CD8-positive, alpha-beta T cell (primary cell): ENCODE measurements at regions of chr17 and their contacts with region 1.

Region 1: GRCh38 chr17:41648411-41649195 is 24.2 kb upstream of the KRT17 start:
- DNase-seq: peak; percentile 65 to 92 (median 86)
- ATAC-seq: peak; percentile 90
- H3K4me3 ChIP-seq: peak overlapping the region; percentile 52 to 55
- H3K4me3 Mint-ChIP-seq: peak overlapping the region; percentile 80
- H3K27ac ChIP-seq: no peak overlapping the region
- H3K27ac Mint-ChIP-seq: no peak overlapping the region
- H3K4me1 ChIP-seq: peaks cover 13% of the 10 kb centered on the region
- H3K4me1 Mint-ChIP-seq: peaks cover 9% of the 10 kb centered on the region
- H3K27me3 ChIP-seq: no peaks in the 10 kb centered on the region
- H3K27me3 Mint-ChIP-seq: no peaks in the 10 kb centered on the region
- CTCF ChIP-seq: peak; percentile 70

Region 2: GRCh38 chr17:40857535-40857934 is 791.1 kb before region 1 on chr17:
- CTCF ChIA-PET with region 1: interaction called, 28 read pairs
- POLR2A ChIA-PET with region 1: no interaction called
- intact Hi-C with region 1: loop called (anchors 1 kb)
- DNase-seq: no peak
- ATAC-seq: no peak
- H3K4me3 ChIP-seq: no peak overlapping the region
- H3K4me3 Mint-ChIP-seq: no peak overlapping the region
- H3K27ac ChIP-seq: no peak overlapping the region
- H3K27ac Mint-ChIP-seq: no peak overlapping the region
- H3K4me1 ChIP-seq: no peaks in the 10 kb centered on the region
- H3K4me1 Mint-ChIP-seq: peaks cover 2% of the 10 kb centered on the region
- H3K27me3 ChIP-seq: no peaks in the 10 kb centered on the region
- H3K27me3 Mint-ChIP-seq: peaks cover 17% of the 10 kb centered on the region
- CTCF ChIP-seq: no peak

Region 3: DNA sequence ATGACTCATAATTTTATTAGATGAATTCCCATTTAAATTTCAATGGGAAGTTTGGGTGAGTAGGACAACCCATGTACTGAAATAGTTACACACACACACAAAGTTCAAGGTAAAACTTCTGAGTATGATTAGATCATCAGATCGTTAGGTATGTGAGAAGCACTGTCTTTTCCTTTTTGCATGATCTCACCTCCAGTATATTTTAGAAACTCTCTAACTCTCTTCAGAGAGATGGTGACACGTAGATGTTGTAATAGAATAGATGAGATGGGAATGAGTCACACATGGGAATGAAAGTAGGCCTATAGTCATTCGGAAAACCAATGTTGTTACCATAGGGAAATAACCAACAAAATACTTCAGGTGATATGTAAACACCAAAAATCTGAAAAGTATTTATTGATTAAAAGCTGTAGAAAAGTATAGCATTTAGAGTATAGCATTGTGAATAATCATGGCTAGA is 733.4 kb before region 1 on chr17:
- CTCF ChIA-PET with region 1: interaction called, 82 read pairs
- POLR2A ChIA-PET with region 1: no interaction called
- intact Hi-C with region 1: no loop called
- DNase-seq: peak in 1 of 9 experiments; percentile 11
- ATAC-seq: no peak
- H3K4me3 ChIP-seq: no peak overlapping the region
- H3K4me3 Mint-ChIP-seq: no peak overlapping the region
- H3K27ac ChIP-seq: no peak overlapping the region
- H3K27ac Mint-ChIP-seq: no peak overlapping the region
- H3K4me1 ChIP-seq: no peaks in the 10 kb centered on the region
- H3K4me1 Mint-ChIP-seq: no peaks in the 10 kb centered on the region
- H3K27me3 ChIP-seq: no peaks in the 10 kb centered on the region
- H3K27me3 Mint-ChIP-seq: no peaks in the 10 kb centered on the region
- CTCF ChIP-seq: no peak

Region 4: GRCh38 chr17:41548844-41549595 is 99.6 kb before region 1 on chr17:
- CTCF ChIA-PET with region 1: interaction called, 85 read pairs
- POLR2A ChIA-PET with region 1: no interaction called
- intact Hi-C with region 1: loop called (anchors 1 kb)
- DNase-seq: peak; percentile 72 to 90 (median 84)
- ATAC-seq: peak; percentile 87
- H3K4me3 ChIP-seq: peak overlapping the region; percentile 11 to 40
- H3K4me3 Mint-ChIP-seq: peak overlapping the region; percentile 54
- H3K27ac ChIP-seq: no peak overlapping the region
- H3K27ac Mint-ChIP-seq: no peak overlapping the region
- H3K4me1 ChIP-seq: peaks cover 14% of the 10 kb centered on the region
- H3K4me1 Mint-ChIP-seq: peaks cover 8% of the 10 kb centered on the region
- H3K27me3 ChIP-seq: no peaks in the 10 kb centered on the region
- H3K27me3 Mint-ChIP-seq: peaks cover 13% of the 10 kb centered on the region
- CTCF ChIP-seq: peak; percentile 82

Region 5: DNA sequence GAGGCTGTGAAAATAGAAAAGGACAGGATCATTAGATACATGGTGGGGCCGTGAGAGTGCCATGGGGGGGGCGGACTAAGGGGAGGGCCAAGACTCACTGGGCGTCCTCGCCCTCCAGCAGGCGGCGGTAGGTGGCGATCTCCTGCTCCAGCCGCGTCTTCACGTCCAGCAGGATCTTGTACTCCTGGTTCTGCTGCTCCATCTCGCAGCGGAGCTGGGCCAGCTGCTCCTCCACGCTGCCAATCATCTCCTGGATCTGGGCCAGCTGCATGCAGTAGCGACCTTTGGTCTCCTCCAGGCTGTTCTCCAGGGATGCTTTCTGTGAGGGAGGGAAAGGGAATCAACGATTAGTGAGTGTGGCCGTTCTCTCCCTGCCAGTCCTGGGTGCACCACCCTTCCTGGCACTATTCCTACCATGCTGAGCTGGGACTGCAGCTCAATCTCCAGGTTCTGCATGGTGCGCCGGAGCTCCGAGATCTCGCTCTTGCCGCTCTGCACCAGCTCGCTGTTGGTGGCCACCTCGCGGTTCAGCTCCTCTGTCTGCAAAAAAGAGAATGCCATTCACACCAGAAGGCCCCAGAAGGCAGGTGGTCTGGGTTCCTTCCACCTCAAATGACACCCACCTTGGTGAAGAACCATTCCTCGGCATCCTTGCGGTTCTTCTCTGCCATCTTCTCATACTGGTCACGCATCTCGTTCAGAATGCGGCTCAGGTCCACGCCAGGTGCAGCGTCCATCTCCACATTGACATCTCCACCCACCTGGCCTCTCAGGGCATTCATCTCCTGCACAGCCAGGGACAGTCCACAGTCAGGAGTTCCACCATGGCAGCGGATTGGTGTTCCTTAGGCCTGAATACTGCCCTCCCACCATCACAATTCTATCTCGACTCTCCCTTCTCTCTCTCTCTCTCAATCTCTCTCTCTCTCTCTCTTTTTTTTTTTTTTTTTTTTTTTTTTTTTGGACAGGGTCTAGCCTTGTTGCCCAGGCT is 65.2 kb before region 1 on chr17:
- CTCF ChIA-PET with region 1: no interaction called
- POLR2A ChIA-PET with region 1: no interaction called
- intact Hi-C with region 1: no loop called
- DNase-seq: no peak
- ATAC-seq: no peak
- H3K4me3 ChIP-seq: no peak overlapping the region
- H3K4me3 Mint-ChIP-seq: no peak overlapping the region
- H3K27ac ChIP-seq: no peak overlapping the region
- H3K27ac Mint-ChIP-seq: no peak overlapping the region
- H3K4me1 ChIP-seq: no peaks in the 10 kb centered on the region
- H3K4me1 Mint-ChIP-seq: no peaks in the 10 kb centered on the region
- H3K27me3 ChIP-seq: no peaks in the 10 kb centered on the region
- H3K27me3 Mint-ChIP-seq: peaks cover 18% of the 10 kb centered on the region
- CTCF ChIP-seq: no peak

Region 6: GRCh38 chr17:41620586-41621434 is 27.8 kb before region 1 on chr17:
- CTCF ChIA-PET with region 1: no interaction called
- POLR2A ChIA-PET with region 1: no interaction called
- intact Hi-C with region 1: no loop called
- DNase-seq: no peak
- ATAC-seq: no peak
- H3K4me3 ChIP-seq: no peak overlapping the region
- H3K4me3 Mint-ChIP-seq: no peak overlapping the region
- H3K27ac ChIP-seq: no peak overlapping the region
- H3K27ac Mint-ChIP-seq: no peak overlapping the region
- H3K4me1 ChIP-seq: no peaks in the 10 kb centered on the region
- H3K4me1 Mint-ChIP-seq: no peaks in the 10 kb centered on the region
- H3K27me3 ChIP-seq: no peaks in the 10 kb centered on the region
- H3K27me3 Mint-ChIP-seq: peaks cover 9% of the 10 kb centered on the region
- CTCF ChIP-seq: no peak

Region 7: DNA sequence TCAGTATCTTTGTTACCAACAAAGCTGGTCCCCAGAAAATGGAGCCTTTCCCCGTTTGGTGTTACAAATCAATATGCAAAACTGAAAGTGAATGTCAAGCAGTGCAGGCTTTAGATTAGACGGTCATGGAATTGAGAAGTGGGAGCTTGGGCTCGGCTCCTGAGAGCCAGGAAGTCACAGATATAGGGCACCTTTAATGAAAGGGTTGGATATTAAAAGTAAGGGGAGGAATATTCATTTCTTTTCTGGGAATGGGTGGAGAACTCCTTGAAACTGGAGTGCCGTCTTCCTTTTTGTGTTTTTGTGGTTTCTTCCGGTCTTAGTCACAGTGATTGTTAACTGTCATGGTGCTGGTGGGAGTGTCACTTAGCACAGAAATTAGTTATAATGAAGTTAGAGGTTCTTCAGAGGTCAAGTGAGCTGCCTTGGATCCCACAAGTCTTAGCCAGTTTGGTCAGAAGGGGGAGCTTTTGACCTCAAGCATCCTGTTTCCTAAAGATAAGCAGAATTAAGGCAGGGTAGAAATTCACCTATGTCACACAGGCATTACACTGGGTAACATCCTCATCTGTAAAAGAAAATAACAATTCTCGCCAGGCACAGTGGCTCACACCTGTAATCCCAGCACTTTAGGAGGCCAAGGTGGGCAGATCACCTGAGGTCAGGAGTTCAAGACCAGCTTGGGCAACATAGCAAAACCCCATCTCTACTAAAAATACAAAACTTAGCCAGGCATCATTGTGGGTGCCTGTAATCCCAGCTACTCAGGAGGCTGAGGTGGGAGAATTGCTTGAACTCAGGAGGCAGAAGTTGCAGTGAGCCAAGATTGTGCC is 30.5 kb after region 1 on chr17:
- CTCF ChIA-PET with region 1: interaction called, 12 read pairs
- POLR2A ChIA-PET with region 1: interaction called, 4 read pairs
- intact Hi-C with region 1: no loop called
- DNase-seq: peak; percentile 15 to 89 (median 60)
- ATAC-seq: peak; percentile 88
- H3K4me3 ChIP-seq: peak overlapping the region; percentile 34 to 52
- H3K4me3 Mint-ChIP-seq: peak overlapping the region; percentile 86
- H3K27ac ChIP-seq: peak overlapping the region; percentile 64 to 74
- H3K27ac Mint-ChIP-seq: peak overlapping the region; percentile 97
- H3K4me1 ChIP-seq: peaks cover 14% of the 10 kb centered on the region
- H3K4me1 Mint-ChIP-seq: peaks cover 24% of the 10 kb centered on the region
- H3K27me3 ChIP-seq: no peaks in the 10 kb centered on the region
- H3K27me3 Mint-ChIP-seq: no peaks in the 10 kb centered on the region
- CTCF ChIP-seq: no peak

Region 8: DNA sequence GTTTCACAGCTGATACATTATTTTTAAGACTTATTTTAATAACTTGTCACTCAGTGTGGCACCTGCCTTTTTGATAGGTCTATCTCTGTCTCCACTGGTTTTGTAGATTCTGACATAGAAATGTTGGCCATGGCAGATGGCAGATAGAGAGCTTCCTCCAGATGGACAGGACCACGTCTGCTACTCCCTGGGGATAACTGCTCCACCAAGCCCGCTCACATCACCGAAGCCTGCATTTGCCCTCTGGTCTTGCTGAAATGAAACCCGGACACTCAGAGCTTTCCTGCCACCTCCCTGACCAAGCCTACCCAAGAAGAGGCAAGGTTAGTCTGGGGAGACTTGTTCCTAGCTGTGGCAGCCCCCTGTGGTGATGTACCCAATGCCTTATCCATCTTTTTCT is 102.3 kb after region 1 on chr17:
- CTCF ChIA-PET with region 1: no interaction called
- POLR2A ChIA-PET with region 1: no interaction called
- intact Hi-C with region 1: no loop called
- DNase-seq: no peak
- ATAC-seq: no peak
- H3K4me3 ChIP-seq: no peak overlapping the region
- H3K4me3 Mint-ChIP-seq: no peak overlapping the region
- H3K27ac ChIP-seq: no peak overlapping the region
- H3K27ac Mint-ChIP-seq: no peak overlapping the region
- H3K4me1 ChIP-seq: no peaks in the 10 kb centered on the region
- H3K4me1 Mint-ChIP-seq: no peaks in the 10 kb centered on the region
- H3K27me3 ChIP-seq: no peaks in the 10 kb centered on the region
- H3K27me3 Mint-ChIP-seq: peaks cover 10% of the 10 kb centered on the region
- CTCF ChIP-seq: no peak